Dorsolateral prefrontal cortex (tissue), 120 donors: ENCODE measurements at regions of chr14 and their contacts with region 1.

Region 1: GRCh38 chr14:104985675-104986525 is at the start of gene CLBA1:
- DNase-seq: peak in 9 of 10 donors; percentile 64 to 97 (median 86)
- H3K4me3 ChIP-seq: peak within 1 kb of the TSS; percentile 51 to 99 (median 87)
- H3K27ac ChIP-seq: peak within 1 kb of the TSS in 47 of 59 donors; percentile 9 to 86 (median 61)
- H3K27me3 ChIP-seq: no peaks in the 10 kb centered on the region
- CTCF ChIP-seq: peak in 9 of 56 donors; percentile 4 to 39 (median 20)
- total RNA-seq, gene CLBA1: 5.2 to 21.3 (median 11.7) TPM

Region 2: DNA sequence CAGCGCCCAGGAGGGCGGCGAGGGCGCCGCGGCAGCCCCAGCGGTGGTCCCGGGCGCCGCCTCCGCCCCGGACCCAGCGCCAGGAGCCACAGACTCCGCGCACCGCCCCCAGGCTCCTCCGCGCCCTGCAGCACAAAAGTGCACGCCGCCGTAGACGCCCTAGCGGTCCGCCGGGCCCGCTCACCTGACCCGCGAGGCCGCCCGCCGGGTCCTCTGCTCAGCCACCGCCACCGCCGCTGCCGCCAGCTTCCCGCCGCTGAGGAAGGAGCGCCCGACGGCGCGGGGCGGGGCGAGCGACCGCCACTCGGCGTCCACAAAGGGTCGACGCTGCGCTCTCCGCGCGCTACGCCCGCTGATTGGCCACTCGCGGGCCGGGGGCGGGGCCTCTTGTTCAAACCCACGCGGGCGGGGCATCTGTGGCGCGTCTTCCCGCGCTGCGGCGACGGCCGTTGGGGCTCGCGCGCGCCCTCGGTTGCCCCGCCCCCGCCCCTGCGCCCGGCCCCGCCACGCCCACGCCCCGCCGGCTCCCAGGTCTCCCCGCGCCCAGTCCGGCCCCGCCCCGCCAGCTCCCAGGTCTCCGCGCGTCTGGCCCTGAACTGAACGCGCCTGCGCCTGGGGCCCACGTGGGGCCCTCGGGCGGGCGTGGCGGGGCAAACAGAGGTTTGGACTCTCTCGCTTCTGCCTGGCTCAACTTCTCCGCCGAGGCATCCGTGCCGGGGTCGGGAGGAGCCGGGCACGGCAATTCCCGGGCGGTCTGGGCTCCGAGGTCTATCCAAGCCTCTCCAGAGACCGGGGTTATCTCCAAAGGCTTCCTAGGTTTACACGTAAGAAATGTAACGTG is 35.1 kb after region 1 on chr14 and contains the start of gene CDCA4:
- intact Hi-C with region 1: loop called (anchors 1 to 5 kb)
- DNase-seq: peak; percentile 96 to 99 (median 98)
- H3K4me3 ChIP-seq: peak within 1 kb of the TSS; percentile 67 to 100 (median 86)
- H3K27ac ChIP-seq: peak within 1 kb of the TSS in 47 of 59 donors; percentile 2 to 89 (median 69)
- H3K27me3 ChIP-seq: no peaks in the 10 kb centered on the region
- CTCF ChIP-seq: peak in 21 of 56 donors; percentile 4 to 46 (median 18)
- total RNA-seq, gene CDCA4: 1.7 to 5.4 (median 3.1) TPM

Region 3: GRCh38 chr14:105180592-105181548 is 195.0 kb after region 1 on chr14 and contains the start of gene NUDT14:
- intact Hi-C with region 1: loop called in 1 of 2 experiments (anchors 10 kb)
- DNase-seq: peak in 6 of 10 donors; percentile 49 to 76 (median 64)
- H3K4me3 ChIP-seq: peak within 1 kb of the TSS; percentile 29 to 73 (median 59)
- H3K27ac ChIP-seq: peak within 1 kb of the TSS in 7 of 59 donors; percentile 11 to 72 (median 41)
- H3K27me3 ChIP-seq: peaks cover 0 to 3% (median 0%) of the 10 kb centered on the region in 45 donors
- CTCF ChIP-seq: peak in 3 of 56 donors; percentile 11 to 33 (median 14)
- total RNA-seq, gene NUDT14: 29.1 to 76.6 (median 47.9) TPM